ENCODE measurements at regions of chr15 and their contacts with region 1.

Region 1: GRCh38 chr15:83436458-83437158 is 10.5 kb upstream of the SH3GL3 start:
- DNase-seq: peak; percentile 33
- ATAC-seq: peak; percentile 90
- H3K4me3 ChIP-seq: no peak overlapping the region
- H3K27ac ChIP-seq: no peak overlapping the region
- H3K4me1 ChIP-seq: no peaks in the 10 kb centered on the region
- H3K27me3 ChIP-seq: no peaks in the 10 kb centered on the region
- CTCF ChIP-seq: peak; percentile 58 to 69 (median 69); a peak in 5 of 6 replicates
- POLR2A ChIP-seq: no peak
- RAD21 ChIP-seq: peak; percentile 75

Region 2: DNA sequence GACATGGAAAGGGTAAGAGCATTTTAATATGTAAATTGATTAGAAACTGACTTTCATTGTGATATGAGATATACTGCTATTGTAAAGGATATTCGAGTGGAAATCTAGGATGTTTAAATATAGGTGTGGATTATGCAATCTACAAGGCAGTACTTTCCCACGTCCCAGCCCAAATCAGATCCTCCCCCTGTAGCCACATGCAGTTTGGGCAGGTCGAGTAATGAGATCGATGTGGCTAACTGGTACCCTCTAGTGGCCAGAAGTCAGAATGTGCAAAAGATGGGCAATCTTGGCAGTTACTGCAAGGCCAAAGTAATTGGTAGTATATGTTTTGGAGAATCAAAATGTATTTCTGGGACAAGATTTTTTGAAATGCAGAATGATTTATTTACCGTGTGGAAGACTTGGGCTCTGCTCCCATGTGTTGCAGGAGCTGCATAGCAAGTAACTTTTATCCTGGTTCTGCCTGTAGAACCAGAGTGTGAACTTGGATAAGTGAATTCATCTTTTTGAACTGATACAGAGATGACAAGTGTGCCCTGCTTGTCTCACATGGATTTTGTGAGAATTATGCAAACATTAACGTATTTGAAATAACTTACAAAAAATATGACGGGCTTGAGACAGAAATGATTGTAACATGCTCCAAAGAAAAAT is 122.8 kb after region 1 on chr15:
- CTCF ChIA-PET with region 1: interaction called, 14 read pairs
- POLR2A ChIA-PET with region 1: no interaction called
- RAD21 ChIA-PET with region 1: no interaction called
- intact Hi-C with region 1: loop called (anchors 1 kb)
- DNase-seq: peak; percentile 60
- ATAC-seq: peak; percentile 97
- H3K4me3 ChIP-seq: no peak overlapping the region
- H3K27ac ChIP-seq: no peak overlapping the region
- H3K4me1 ChIP-seq: no peaks in the 10 kb centered on the region
- H3K27me3 ChIP-seq: no peaks in the 10 kb centered on the region
- CTCF ChIP-seq: peak; percentile 75 to 89 (median 82)
- POLR2A ChIP-seq: no peak
- RAD21 ChIP-seq: peak; percentile 85

Measured in HCT116 (cell line).